ENCODE measurements at regions of chr17 and their contacts with region 1.

Region 1: DNA sequence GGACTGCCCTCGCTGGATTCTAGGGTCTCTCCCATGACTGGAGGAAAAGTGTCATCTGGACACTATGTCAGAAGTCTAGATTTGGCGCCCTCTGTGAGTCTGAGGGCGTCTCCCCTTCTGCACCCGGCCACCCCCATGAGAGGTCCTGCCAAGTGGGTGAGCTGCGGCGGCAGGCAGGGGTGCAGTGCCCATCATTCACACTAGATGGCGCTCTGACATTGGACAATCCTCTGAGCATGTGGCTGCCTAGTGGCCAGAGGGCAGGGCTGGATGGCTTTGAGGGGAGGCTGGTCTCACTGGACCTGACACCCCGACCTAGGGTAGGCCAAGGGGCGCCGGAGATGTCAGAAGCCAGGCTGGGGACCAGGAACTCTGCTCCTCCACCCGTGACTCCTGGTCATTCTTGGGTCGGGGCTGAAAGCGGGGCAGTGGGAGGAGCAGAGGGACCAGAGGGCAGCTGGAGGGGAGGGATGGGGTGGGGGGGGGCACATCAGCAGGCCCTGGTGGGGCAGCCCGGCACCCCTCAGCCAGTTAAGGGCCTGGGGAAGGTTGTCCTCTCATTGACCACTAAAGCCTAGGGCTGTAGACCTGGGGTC is 28.0 kb downstream of the MRM1 start:
- DNase-seq: peak; percentile 41 to 60
- ATAC-seq: peak; percentile 85 to 87
- H3K4me3 ChIP-seq: no peak overlapping the region
- H3K27ac ChIP-seq: no peak overlapping the region
- H3K4me1 ChIP-seq: peaks cover 0 to 2% of the 10 kb centered on the region in 2 donors
- H3K27me3 ChIP-seq: peaks cover 0 to 8% (median 0%) of the 10 kb centered on the region in 3 donors
- CTCF ChIP-seq: peak; percentile 86 to 98 (median 92)
- POLR2A ChIP-seq: no peak

Region 2: DNA sequence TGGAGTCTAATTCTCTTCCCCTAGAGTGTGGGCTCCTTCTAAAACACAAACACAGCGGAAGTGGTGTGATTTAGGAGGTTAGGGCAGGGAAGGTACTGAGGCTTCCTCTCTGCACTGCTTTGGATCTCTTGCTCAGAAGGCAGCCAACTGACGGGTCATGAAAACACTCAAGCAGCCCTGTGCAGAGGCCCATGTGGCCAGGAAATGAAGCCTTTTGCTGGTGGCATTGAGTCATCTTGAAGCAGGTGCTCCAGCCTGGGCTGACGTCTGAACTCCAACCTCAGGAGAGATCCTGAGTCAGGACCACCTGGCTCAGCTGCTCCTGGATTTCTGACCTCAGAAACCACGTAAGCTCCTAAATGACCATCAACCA is 44.9 kb after region 1 on chr17:
- in situ Hi-C with region 1: no loop called
- intact Hi-C with region 1: no loop called
- DNase-seq: no peak
- ATAC-seq: no peak
- H3K4me3 ChIP-seq: no peak overlapping the region
- H3K27ac ChIP-seq: no peak overlapping the region
- H3K4me1 ChIP-seq: no peaks in the 10 kb centered on the region
- H3K27me3 ChIP-seq: no peaks in the 10 kb centered on the region
- CTCF ChIP-seq: no peak
- POLR2A ChIP-seq: no peak

Region 3: DNA sequence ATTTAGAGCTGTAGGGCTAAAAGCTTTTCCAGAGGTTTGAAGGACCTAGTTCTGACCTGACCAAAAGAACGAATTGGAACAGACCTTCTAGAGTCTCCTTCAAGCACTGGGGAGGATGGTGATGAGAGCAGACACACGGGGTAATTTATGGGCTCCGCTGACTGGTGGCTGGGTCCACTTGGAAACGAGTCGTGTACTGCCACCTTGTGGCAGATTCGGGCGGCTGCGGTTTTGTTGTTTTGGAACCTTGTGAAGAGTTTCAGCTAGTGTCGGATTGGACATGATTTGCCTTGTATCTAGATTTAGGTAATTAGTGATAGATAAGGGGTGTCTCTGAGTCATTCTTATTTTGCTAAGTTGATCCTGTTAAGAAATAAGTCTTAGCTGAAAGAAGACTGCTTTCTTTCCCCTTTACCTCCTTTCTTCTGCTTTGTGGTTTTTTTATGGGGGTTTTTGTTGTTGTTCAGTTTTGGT is 418.3 kb after region 1 on chr17:
- in situ Hi-C with region 1: loop called in 3 of 4 experiments (anchors 5 to 10 kb)
- intact Hi-C with region 1: loop called (anchors 2 kb)
- DNase-seq: peak; percentile 54 to 73
- ATAC-seq: peak; percentile 62 to 91
- H3K4me3 ChIP-seq: no peak overlapping the region
- H3K27ac ChIP-seq: no peak overlapping the region
- H3K4me1 ChIP-seq: peaks cover 0 to 5% of the 10 kb centered on the region in 2 donors
- H3K27me3 ChIP-seq: no peaks in the 10 kb centered on the region
- CTCF ChIP-seq: peak; percentile 55 to 88 (median 80)
- POLR2A ChIP-seq: no peak

Region 4: GRCh38 chr17:37239690-37240334 is 610.5 kb after region 1 on chr17:
- in situ Hi-C with region 1: loop called in 3 of 4 experiments (anchors 10 to 25 kb)
- intact Hi-C with region 1: no loop called
- DNase-seq: no peak
- ATAC-seq: peak in 1 of 2 donors; percentile 67
- H3K4me3 ChIP-seq: no peak overlapping the region
- H3K27ac ChIP-seq: peak overlapping the region in 1 of 4 donors; percentile 25
- H3K4me1 ChIP-seq: peaks cover 3 to 6% of the 10 kb centered on the region in 2 donors
- H3K27me3 ChIP-seq: no peaks in the 10 kb centered on the region
- CTCF ChIP-seq: peak; percentile 22 to 53 (median 36)
- POLR2A ChIP-seq: no peak

Region 5: DNA sequence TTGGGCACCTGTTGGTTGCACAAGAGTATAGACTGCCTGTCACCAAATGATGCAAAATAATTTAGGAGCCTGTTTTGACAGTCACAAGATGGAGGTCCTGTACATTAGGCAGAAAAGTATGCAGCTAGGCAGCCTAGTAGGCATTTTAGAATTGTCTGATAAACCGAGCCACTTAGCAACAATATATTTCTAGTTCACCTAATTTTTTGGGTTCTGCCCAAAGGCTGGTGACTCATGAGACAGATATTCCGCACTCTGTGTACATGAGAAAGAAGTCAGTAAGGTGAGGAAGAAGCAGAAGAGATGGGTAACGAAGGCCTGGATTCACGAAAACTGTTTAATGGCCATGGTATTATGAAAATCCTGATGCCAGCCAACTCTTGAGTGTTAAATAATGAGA is 770.1 kb after region 1 on chr17:
- in situ Hi-C with region 1: no loop called
- intact Hi-C with region 1: loop called (anchors 5 kb)
- DNase-seq: no peak
- ATAC-seq: no peak
- H3K4me3 ChIP-seq: no peak overlapping the region
- H3K27ac ChIP-seq: no peak overlapping the region
- H3K4me1 ChIP-seq: peaks cover 0 to 3% of the 10 kb centered on the region in 2 donors
- H3K27me3 ChIP-seq: no peaks in the 10 kb centered on the region
- CTCF ChIP-seq: no peak
- POLR2A ChIP-seq: no peak

Measured in gastrocnemius medialis (tissue), 4 donors.